ENCODE measurements at regions of chr9 and their contacts with region 1.

Region 1: DNA sequence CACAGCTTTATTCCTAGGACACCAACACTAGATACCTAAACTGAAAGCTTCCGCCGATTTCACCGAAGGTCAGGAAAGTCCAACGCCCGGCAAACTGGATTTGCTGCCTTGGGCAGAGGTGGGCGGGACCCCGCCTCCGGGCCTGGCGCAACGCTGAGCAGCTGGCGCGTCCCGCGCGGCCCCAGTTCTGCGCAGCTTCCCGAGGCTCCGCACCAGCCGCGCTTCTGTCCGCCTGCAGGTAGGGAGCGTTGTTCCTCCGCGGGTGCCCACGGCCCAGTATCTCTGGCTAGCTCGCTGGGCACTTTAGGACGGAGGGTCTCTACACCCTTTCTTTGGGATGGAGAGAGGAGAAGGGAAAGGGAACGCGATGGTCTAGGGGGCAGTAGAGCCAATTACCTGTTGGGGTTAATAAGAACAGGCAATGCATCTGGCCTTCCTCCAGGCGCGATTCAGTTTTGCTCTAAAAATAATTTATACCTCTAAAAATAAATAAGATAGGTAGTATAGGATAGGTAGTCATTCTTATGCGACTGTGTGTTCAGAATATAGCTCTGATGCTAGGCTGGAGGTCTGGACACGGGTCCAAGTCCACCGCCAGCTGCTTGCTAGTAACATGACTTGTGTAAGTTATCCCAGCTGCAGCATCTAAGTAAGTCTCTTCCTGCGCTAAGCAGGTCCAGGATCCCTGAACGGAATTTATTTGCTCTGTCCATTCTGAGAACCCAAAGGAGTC is at the start of gene CD274:
- DNase-seq: peak; percentile 94
- H3K4me3 ChIP-seq: peak within 1 kb of the TSS; percentile 56 to 70 (median 58)
- H3K27ac ChIP-seq: peak within 1 kb of the TSS; percentile 73 to 80 (median 76)
- H3K4me1 ChIP-seq: peaks cover 16 to 23% (median 18%) of the 10 kb centered on the region in 4 donors
- H3K27me3 ChIP-seq: no peaks in the 10 kb centered on the region
- CTCF ChIP-seq: peak; percentile 75 to 81 (median 75)
- EP300 ChIP-seq: no peak
- POLR2A ChIP-seq: no peak
- total RNA-seq, gene CD274: 0.65 to 4.5 (median 2.6) TPM

Region 2: DNA sequence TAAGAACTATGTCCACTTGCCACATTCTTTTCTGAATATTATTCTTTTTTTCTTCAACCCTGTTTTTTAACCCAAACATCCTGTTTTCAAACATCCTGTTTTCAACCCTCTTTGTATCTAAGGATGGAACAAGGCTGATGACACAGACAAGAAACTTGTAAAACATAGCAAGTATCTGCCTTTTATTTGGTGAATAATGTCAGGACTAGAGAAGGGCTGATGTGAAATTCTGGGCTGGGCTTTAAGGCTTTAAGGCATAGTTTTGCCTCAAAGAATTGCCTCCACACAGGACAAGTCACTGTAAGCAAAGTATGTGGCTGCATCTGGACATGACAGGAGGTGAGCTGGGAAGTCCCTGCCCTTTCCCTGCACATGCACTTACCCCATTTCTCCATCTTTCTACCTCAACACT is 135.9 kb after region 1 on chr9:
- intact Hi-C with region 1: loop called (anchors 5 kb)
- DNase-seq: peak; percentile 24
- H3K4me3 ChIP-seq: no peak overlapping the region
- H3K27ac ChIP-seq: no peak overlapping the region
- H3K4me1 ChIP-seq: peaks cover 7 to 17% (median 8%) of the 10 kb centered on the region in 4 donors
- H3K27me3 ChIP-seq: no peaks in the 10 kb centered on the region
- CTCF ChIP-seq: no peak
- EP300 ChIP-seq: no peak
- POLR2A ChIP-seq: no peak

Region 3: GRCh38 chr9:6015278-6016157 is 565.0 kb after region 1 on chr9 and contains the start of gene RANBP6:
- intact Hi-C with region 1: loop called (anchors 10 kb)
- DNase-seq: peak; percentile 95
- H3K4me3 ChIP-seq: peak within 1 kb of the TSS; percentile 67 to 78 (median 75)
- H3K27ac ChIP-seq: peak within 1 kb of the TSS; percentile 82 to 87 (median 85)
- H3K4me1 ChIP-seq: peaks cover 22 to 45% (median 38%) of the 10 kb centered on the region in 4 donors
- H3K27me3 ChIP-seq: no peaks in the 10 kb centered on the region
- CTCF ChIP-seq: no peak
- EP300 ChIP-seq: no peak
- POLR2A ChIP-seq: peak; percentile 36
- total RNA-seq, gene RANBP6: 10.0 to 13.9 (median 12.1) TPM